ENCODE measurements at regions of chr7 and their contacts with region 1.

Region 1: DNA sequence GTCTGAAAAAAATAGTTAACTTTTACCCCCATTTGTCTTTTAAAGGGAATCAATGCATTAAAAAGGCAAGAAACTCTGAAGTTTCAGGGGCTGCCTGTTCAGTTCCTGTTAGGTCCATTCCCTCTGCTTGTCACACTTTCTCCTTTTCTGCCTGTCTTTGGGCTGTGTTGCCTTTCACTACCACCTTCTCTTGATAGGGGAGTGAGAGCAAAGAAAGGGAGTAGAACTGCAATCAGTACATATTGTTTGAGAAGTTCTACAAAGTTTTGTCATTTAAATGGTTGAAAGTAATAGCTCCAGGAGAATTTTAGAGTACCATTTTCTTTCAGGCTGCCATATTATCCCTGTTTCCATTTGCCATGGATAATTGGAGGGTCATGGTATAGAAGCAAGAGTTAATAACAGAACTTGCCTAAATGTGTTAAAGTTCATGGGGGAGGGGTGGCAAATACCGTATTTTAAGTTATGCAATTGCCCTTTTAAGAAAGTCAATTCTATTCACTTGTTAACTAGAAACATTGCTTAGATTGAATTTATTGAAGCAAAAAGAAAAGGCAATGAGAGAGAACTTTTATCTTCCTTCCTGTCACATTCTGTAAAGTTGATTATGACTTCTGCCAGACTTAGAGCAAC is 38.6 kb downstream of the MPLKIP start:
- DNase-seq: no peak
- ATAC-seq: no peak
- H3K4me3 Mint-ChIP-seq: no peak overlapping the region
- H3K27ac Mint-ChIP-seq: no peak overlapping the region
- H3K4me1 Mint-ChIP-seq: no peaks in the 10 kb centered on the region
- H3K27me3 Mint-ChIP-seq: no peaks in the 10 kb centered on the region
- CTCF ChIP-seq: no peak

Region 2: GRCh38 chr7:38881015-38881414 is 1214.8 kb before region 1 on chr7:
- CTCF ChIA-PET with region 1: no interaction called
- POLR2A ChIA-PET with region 1: no interaction called
- intact Hi-C with region 1: no loop called
- DNase-seq: no peak
- ATAC-seq: no peak
- H3K4me3 Mint-ChIP-seq: no peak overlapping the region
- H3K27ac Mint-ChIP-seq: peak overlapping the region; percentile 11
- H3K4me1 Mint-ChIP-seq: peaks cover 46% of the 10 kb centered on the region
- H3K27me3 Mint-ChIP-seq: no peaks in the 10 kb centered on the region
- CTCF ChIP-seq: no peak

Region 3: DNA sequence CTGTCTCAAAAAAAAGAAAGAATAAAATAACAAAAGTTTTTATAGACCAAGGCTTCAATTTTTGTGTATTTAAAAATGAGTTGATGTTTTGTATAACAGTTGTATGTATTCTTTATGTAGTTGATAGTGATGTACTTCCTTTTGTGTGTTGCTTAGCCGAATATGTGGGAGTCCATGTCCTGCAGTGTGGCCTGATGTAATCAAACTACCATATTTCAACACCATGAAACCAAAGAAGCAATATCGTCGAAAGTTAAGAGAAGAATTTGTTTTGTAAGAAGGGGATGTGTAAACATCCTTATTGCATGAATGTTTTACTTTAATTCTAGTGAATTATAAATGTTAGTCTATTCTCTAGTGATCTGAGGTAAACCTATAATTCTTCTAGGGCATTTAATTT is 18.0 kb before region 1 on chr7:
- CTCF ChIA-PET with region 1: no interaction called
- POLR2A ChIA-PET with region 1: interaction called, 10 read pairs
- intact Hi-C with region 1: no loop called
- DNase-seq: no peak
- ATAC-seq: no peak
- H3K4me3 Mint-ChIP-seq: no peak overlapping the region
- H3K27ac Mint-ChIP-seq: no peak overlapping the region
- H3K4me1 Mint-ChIP-seq: no peaks in the 10 kb centered on the region
- H3K27me3 Mint-ChIP-seq: no peaks in the 10 kb centered on the region
- CTCF ChIP-seq: no peak

Region 4: GRCh38 chr7:40530292-40530691 is 434.5 kb after region 1 on chr7:
- CTCF ChIA-PET with region 1: no interaction called
- POLR2A ChIA-PET with region 1: no interaction called
- intact Hi-C with region 1: no loop called
- DNase-seq: no peak
- ATAC-seq: no peak
- H3K4me3 Mint-ChIP-seq: no peak overlapping the region
- H3K27ac Mint-ChIP-seq: no peak overlapping the region
- H3K4me1 Mint-ChIP-seq: no peaks in the 10 kb centered on the region
- H3K27me3 Mint-ChIP-seq: no peaks in the 10 kb centered on the region
- CTCF ChIP-seq: no peak

Measured in activated B cell treated with CpG ODN at 0.5 μM for 24 hours (primary cell).